GM13977 (cell line): ENCODE measurements at regions of chr11 and their contacts with region 1.

Region 1: DNA sequence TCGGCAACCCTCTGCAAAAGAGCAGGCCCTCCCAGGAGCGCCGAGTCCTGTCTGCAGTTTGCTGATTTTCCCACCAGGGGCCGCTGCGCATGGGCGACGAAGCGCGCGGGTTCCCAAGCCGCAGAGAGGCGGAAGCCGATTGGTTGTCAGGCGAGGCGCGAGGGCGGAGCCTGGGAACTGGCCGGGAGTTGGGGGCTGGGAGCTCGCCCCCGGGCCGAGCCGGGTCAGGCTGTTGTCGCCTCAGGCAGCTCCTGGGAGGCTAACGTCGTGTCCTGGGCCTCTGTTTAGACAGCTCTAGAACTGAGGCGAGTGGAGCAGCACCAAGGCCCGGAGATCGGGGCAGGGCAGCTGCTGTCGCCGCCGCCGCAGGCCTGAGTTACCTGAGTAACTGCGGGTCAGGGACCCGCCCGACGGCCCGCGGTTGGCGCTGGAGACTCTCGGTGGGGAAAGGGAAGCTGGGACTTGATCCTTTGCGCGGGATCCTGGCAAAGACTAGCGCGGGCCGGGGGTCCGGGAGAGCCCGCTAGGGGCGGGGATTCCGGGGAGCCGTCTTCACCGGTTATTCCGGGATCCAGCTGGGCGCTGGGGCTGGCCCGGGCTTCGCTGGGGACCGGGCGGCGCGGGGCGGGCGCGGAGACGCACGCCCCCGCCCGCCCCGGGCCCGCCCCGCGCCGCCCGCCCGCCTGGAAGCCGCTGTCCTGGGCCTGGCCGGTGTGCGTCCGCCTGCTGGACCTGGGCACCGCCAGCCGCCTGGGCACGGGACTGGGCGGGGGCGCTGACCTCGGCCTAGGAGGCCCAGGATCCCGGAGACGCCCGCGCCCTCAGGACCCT is at the start of gene STIM1:
- DNase-seq: peak; percentile 94
- CTCF ChIP-seq: peak; percentile 95

Region 2: GRCh38 chr11:3914805-3915204 is 59.6 kb after region 1 on chr11:
- in situ Hi-C with region 1: no loop called
- DNase-seq: no peak
- CTCF ChIP-seq: no peak

Region 3: DNA sequence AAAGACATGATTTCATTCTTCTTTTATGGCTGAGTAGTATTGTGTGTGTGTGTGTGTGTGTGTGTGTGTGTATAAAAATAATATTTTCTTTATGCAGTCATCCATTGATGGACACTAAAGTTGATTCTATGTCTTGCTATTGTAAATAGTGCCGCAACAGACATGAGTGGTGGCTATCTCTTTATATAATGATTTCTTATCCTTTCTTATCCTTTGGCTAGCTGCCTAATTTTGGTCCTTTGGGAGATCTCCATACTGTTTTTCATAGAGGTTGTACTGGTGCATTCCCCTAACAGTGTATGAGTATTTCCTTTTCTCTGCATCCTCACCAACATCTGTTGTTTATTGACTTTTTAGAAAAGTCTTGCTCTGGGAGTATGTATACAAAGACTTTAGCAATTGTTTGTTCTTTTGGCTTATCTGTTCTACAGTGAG is 107.2 kb after region 1 on chr11:
- in situ Hi-C with region 1: loop called (anchors 10 kb)
- DNase-seq: no peak
- CTCF ChIP-seq: no peak

Region 4: GRCh38 chr11:3984896-3985295 is 129.7 kb after region 1 on chr11:
- in situ Hi-C with region 1: no loop called
- DNase-seq: no peak
- CTCF ChIP-seq: peak; percentile 34